Activated B cell treated with CpG ODN at 0.5 μM for 24 hours (primary cell): ENCODE measurements at regions of chr10 and their contacts with region 1.

Region 1: DNA sequence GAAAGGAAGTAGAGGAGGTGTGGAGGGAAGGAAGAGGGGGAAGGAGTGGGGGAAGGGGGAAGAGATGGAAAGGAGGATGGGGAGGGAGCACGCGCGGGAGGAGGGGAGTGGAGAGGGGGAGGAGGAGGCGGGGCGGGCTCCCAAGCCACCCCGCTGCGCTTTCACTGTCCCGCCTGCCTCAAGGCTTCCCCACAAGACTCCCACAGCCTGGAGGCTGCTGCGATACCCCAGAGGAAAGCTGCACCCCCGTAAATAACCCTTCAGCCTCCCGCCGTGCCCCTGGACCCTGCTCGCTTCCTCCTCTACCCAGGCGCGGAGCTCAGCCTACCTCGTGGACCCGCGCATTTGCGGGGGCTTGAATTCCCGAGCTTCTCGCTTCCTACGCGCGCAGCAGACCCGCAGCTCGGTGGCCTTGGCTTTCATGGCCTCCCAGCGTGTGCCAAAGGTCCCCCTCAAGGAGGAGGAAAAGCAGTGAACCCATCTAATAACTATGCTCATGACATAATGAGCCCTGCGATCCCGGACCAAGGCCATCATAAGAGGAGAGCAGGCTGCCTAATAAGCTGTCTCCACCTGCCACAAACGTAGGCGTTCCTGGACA is at the start of gene C10orf67:
- DNase-seq: no peak
- ATAC-seq: peak; percentile 54
- H3K4me3 Mint-ChIP-seq: peak within 1 kb of the TSS; percentile 85
- H3K27ac Mint-ChIP-seq: peak within 1 kb of the TSS; percentile 31
- H3K4me1 Mint-ChIP-seq: peaks cover 18% of the 10 kb centered on the region
- H3K27me3 Mint-ChIP-seq: peaks cover 11% of the 10 kb centered on the region
- CTCF ChIP-seq: no peak
- total RNA-seq, gene C10orf67: not detected in 2 replicates

Region 2: GRCh38 chr10:23362879-23363792 is 18.8 kb after region 1 on chr10:
- CTCF ChIA-PET with region 1: no interaction called
- POLR2A ChIA-PET with region 1: no interaction called
- intact Hi-C with region 1: loop called (anchors 2 kb)
- DNase-seq: no peak
- ATAC-seq: no peak
- H3K4me3 Mint-ChIP-seq: peak overlapping the region; percentile 4
- H3K27ac Mint-ChIP-seq: no peak overlapping the region
- H3K4me1 Mint-ChIP-seq: peaks cover 33% of the 10 kb centered on the region
- H3K27me3 Mint-ChIP-seq: peaks cover 28% of the 10 kb centered on the region
- CTCF ChIP-seq: no peak